K562 (cell line): ENCODE measurements at regions of chr5 and their contacts with region 1.

Region 1: DNA sequence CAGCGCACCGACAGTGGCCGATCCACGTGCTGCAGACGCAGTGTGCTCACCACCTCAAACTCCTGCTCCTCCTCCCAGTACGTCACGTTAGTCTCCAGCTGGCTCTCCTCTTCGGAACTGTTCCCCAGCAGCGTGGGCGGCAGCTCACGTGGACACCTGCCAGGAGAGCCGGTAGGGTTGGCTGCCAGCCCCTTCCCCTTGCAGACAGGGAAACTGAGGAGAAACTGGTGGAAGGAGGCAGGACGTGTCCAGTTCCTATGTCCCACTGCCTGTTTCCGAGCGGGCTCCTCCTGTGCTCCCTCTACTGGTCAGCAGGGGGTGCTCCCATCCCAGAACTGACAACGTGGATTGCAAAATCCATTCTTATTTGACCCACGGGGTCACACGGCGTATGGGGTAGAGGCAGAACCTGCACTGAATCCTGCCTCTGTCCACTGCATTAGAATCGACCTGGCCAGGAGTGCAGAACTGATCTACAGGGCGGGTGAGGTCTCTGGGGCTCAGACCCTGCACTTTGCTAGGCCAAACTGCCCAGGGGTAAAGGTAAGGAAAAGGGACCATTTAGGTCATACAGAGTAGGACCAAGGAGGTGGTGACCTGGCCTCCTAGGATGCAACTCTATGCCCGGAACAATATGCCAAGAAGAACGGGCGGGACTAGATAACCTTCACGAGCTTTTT is 25.7 kb downstream of the PDGFRB start:
- DNase-seq: peak; percentile 82 to 91 (median 89)
- ATAC-seq: peak; percentile 93
- H3K4me3 ChIP-seq: peak overlapping the region; percentile 14; the same call in 1 of the 2 replicates
- H3K27ac ChIP-seq: no peak overlapping the region
- H3K4me1 ChIP-seq: peaks cover 8 to 11% of the 10 kb centered on the region in 2 experiments; a peak in 4 of 5 replicates
- H3K27me3 ChIP-seq: peaks cover 5 to 20% of the 10 kb centered on the region in 2 experiments; a peak in 4 of 5 replicates
- CTCF ChIP-seq: peak; percentile 87 to 98 (median 97)
- EP300 ChIP-seq: no peak
- POLR2A ChIP-seq: no peak
- RAD21 ChIP-seq: peak; percentile 97

Region 2: DNA sequence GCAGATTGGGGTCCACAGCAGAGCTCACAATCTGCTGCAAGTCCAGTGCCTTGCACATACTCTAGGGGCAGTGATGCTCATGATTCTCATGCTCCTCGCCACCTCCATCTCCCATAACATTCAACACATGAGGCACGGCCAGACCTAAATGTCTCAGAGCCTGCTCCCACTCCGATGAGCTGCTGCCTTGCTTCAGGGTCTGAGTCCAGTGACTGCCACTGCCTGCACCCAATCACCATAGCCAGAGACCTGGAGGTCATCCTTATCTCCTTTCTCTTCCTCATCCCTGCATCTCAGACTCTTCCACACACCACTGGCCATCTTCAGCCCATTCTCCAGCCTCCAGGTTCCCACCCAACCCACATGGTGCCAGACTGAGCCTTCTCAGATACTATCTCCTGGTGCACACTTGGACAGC is 54.1 kb before region 1 on chr5:
- CTCF ChIA-PET with region 1: no interaction called
- POLR2A ChIA-PET with region 1: no interaction called
- in situ Hi-C with region 1: no loop called
- intact Hi-C with region 1: loop called (anchors 10 kb)
- DNase-seq: peak in 2 of 4 experiments; percentile 27 to 40
- ATAC-seq: peak; percentile 85
- H3K4me3 ChIP-seq: no peak overlapping the region
- H3K27ac ChIP-seq: no peak overlapping the region
- H3K4me1 ChIP-seq: peaks cover 0 to 4% of the 10 kb centered on the region in 2 experiments; a peak in 2 of 5 replicates
- H3K27me3 ChIP-seq: peaks cover 27 to 73% of the 10 kb centered on the region in 2 experiments
- CTCF ChIP-seq: peak; percentile 36 to 46 (median 38); a peak in 3 of 6 replicates
- EP300 ChIP-seq: no peak
- POLR2A ChIP-seq: no peak
- RAD21 ChIP-seq: peak in 1 of 2 experiments; percentile 42; a peak in 2 of 4 replicates

Region 3: GRCh38 chr5:150217873-150218692 is 88.1 kb after region 1 on chr5:
- CTCF ChIA-PET with region 1: interaction called, 36 read pairs
- POLR2A ChIA-PET with region 1: interaction called, 3 read pairs
- in situ Hi-C with region 1: loop called (anchors 5 kb)
- intact Hi-C with region 1: loop called (anchors 1 kb)
- DNase-seq: peak; percentile 82 to 89 (median 88)
- ATAC-seq: peak; percentile 97
- H3K4me3 ChIP-seq: no peak overlapping the region
- H3K27ac ChIP-seq: no peak overlapping the region
- H3K4me1 ChIP-seq: peaks cover 3 to 4% of the 10 kb centered on the region in 2 experiments; a peak in 3 of 5 replicates
- H3K27me3 ChIP-seq: peaks cover 13 to 34% of the 10 kb centered on the region in 2 experiments; a peak in 4 of 5 replicates
- CTCF ChIP-seq: peak; percentile 89 to 94 (median 90)
- EP300 ChIP-seq: no peak
- POLR2A ChIP-seq: no peak
- RAD21 ChIP-seq: peak; percentile 96

Region 4: DNA sequence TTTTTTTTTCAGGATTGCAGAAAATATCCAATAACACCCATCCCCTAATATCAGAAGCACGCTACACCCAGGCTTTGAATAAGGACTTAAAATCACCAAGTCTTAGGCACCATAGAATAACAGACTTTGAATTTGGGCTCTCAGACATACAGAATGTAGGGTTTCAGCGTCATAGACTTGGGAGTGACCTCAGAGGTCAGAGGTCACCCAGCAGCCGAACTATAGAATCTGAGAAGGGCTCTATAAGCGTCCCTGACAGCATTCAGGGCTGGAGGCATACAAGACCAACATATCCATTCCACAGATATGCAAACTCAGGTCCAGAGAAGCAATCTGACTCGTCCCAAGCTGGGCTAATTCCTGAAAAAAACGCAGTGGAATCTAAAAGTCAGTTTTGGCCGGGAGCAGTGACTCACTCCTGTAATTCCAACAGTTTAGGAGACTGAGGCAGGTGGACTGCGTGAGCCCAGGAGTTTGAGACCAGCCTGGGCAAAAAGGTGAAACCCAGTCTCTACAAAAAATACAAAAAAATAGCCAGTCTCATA is 94.6 kb after region 1 on chr5:
- CTCF ChIA-PET with region 1: interaction called, 36 read pairs
- POLR2A ChIA-PET with region 1: interaction called, 3 read pairs
- in situ Hi-C with region 1: loop called (anchors 5 kb)
- intact Hi-C with region 1: no loop called
- DNase-seq: peak; percentile 63 to 67 (median 66)
- ATAC-seq: peak; percentile 82
- H3K4me3 ChIP-seq: no peak overlapping the region
- H3K27ac ChIP-seq: no peak overlapping the region
- H3K4me1 ChIP-seq: no peaks in the 10 kb centered on the region
- H3K27me3 ChIP-seq: peaks cover 13 to 45% of the 10 kb centered on the region in 2 experiments
- CTCF ChIP-seq: no peak
- EP300 ChIP-seq: no peak
- POLR2A ChIP-seq: no peak
- RAD21 ChIP-seq: no peak